ENCODE measurements at regions of chr3 and their contacts with region 1.

Region 1: GRCh38 chr3:212432-212831 is 15.9 kb downstream of the CHL1 start:
- DNase-seq: peak; percentile 80
- ATAC-seq: peak; percentile 76
- H3K4me3 ChIP-seq: no peak overlapping the region
- H3K4me3 Mint-ChIP-seq: peak overlapping the region; percentile 57
- H3K27ac ChIP-seq: peak overlapping the region; percentile 22 to 55
- H3K27ac Mint-ChIP-seq: peak overlapping the region; percentile 82
- H3K4me1 ChIP-seq: peaks cover 16% of the 10 kb centered on the region in 2 donors
- H3K4me1 Mint-ChIP-seq: peaks cover 17% of the 10 kb centered on the region
- H3K27me3 ChIP-seq: no peaks in the 10 kb centered on the region
- H3K27me3 Mint-ChIP-seq: no peaks in the 10 kb centered on the region
- CTCF ChIP-seq: no peak

Region 2: GRCh38 chr3:200758-201325 is 11.6 kb before region 1 on chr3:
- CTCF ChIA-PET with region 1: no interaction called
- POLR2A ChIA-PET with region 1: no interaction called
- intact Hi-C with region 1: loop called (anchors 1 kb)
- DNase-seq: no peak
- ATAC-seq: no peak
- H3K4me3 ChIP-seq: no peak overlapping the region
- H3K4me3 Mint-ChIP-seq: no peak overlapping the region
- H3K27ac ChIP-seq: no peak overlapping the region
- H3K27ac Mint-ChIP-seq: no peak overlapping the region
- H3K4me1 ChIP-seq: peaks cover 19 to 21% of the 10 kb centered on the region in 2 donors
- H3K4me1 Mint-ChIP-seq: peaks cover 11% of the 10 kb centered on the region
- H3K27me3 ChIP-seq: peaks cover 0 to 26% (median 11%) of the 10 kb centered on the region in 4 experiments
- H3K27me3 Mint-ChIP-seq: peaks cover 25% of the 10 kb centered on the region
- CTCF ChIP-seq: no peak

Region 3: DNA sequence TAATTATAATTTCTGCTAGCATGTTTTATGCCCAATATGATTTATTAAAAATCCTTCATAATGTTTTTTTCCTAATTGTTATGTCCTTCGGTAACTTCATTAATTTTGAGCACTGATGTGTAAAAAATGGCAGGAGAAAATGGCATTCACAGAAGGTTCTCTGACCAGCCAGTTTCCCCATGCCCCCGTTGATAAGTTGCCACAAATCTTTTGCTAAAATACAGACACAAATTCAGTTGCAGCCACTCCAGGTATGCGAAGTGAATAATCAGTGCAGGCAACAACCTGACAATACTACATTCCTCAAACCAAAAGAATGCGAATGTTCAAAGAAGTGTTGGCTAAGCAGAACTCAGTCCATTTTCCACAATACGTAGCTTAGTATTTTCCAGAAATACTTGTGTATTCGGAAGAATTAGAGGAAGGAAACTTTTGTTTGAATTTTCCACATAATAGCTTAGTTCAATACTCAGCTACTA is 16.8 kb after region 1 on chr3:
- CTCF ChIA-PET with region 1: no interaction called
- POLR2A ChIA-PET with region 1: no interaction called
- intact Hi-C with region 1: no loop called
- DNase-seq: no peak
- ATAC-seq: no peak
- H3K4me3 ChIP-seq: no peak overlapping the region
- H3K4me3 Mint-ChIP-seq: no peak overlapping the region
- H3K27ac ChIP-seq: no peak overlapping the region
- H3K27ac Mint-ChIP-seq: no peak overlapping the region
- H3K4me1 ChIP-seq: peaks cover under 1% of the 10 kb centered on the region in 2 donors
- H3K4me1 Mint-ChIP-seq: peaks cover under 1% of the 10 kb centered on the region
- H3K27me3 ChIP-seq: no peaks in the 10 kb centered on the region
- H3K27me3 Mint-ChIP-seq: no peaks in the 10 kb centered on the region
- CTCF ChIP-seq: no peak

Region 4: DNA sequence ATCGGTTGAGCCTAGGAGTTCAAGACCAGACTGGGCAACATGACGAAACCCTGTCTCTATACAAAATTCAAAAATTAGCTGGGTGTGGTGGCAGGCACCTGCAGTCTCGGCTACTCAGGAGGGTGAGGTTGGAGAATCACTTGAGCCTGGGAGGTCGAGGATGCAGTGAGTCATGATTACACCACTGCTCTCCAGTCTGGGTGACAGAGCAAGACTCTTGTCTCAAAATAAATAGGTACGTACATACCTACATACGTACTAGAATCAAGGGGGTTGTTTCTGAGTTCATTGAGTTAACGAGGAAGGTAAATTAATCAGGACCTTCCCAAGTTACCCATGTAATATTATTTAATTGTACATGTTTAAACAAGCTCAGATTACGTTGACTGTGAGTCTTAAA is 81.7 kb after region 1 on chr3:
- CTCF ChIA-PET with region 1: interaction called, 4 read pairs
- POLR2A ChIA-PET with region 1: no interaction called
- intact Hi-C with region 1: loop called (anchors 5 kb)
- DNase-seq: no peak
- ATAC-seq: no peak
- H3K4me3 ChIP-seq: no peak overlapping the region
- H3K4me3 Mint-ChIP-seq: no peak overlapping the region
- H3K27ac ChIP-seq: no peak overlapping the region
- H3K27ac Mint-ChIP-seq: peak overlapping the region; percentile 32
- H3K4me1 ChIP-seq: peaks cover 40 to 41% of the 10 kb centered on the region in 2 donors
- H3K4me1 Mint-ChIP-seq: peaks cover 47% of the 10 kb centered on the region
- H3K27me3 ChIP-seq: no peaks in the 10 kb centered on the region
- H3K27me3 Mint-ChIP-seq: no peaks in the 10 kb centered on the region
- CTCF ChIP-seq: no peak

Measured in B cell (primary cell).